Lower lobe of right lung (tissue), 2 donors: ENCODE measurements at regions of chr14 and their contacts with region 1.

Region 1: GRCh38 chr14:102437997-102438915 is 71.3 kb downstream of the ANKRD9 start:
- DNase-seq: peak; percentile 88
- ATAC-seq: peak; percentile 95 to 96
- H3K4me3 ChIP-seq: peak overlapping the region; percentile 33
- H3K27ac ChIP-seq: no peak overlapping the region
- H3K4me1 ChIP-seq: peaks cover 8% of the 10 kb centered on the region
- H3K27me3 ChIP-seq: no peaks in the 10 kb centered on the region
- CTCF ChIP-seq: peak; percentile 84

Region 2: DNA sequence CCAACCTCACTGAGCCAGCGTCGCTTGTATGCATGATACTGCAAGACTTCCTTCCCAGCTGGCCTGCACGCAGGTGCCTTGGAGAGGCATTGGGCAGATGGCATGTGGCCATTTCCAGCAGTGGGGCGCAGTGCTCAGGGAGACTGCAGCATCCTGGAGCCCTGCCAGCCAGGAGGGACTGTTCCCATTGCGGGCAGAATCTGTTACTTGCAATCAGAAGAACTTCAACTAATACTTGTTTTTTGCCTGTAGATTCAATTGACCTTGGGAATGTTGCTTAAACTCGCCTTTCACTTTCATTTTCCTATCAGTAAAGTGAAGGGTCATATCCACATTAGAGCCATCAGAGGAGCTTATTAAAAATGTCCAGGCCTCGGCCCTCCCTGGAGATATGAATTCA is 41.5 kb after region 1 on chr14:
- intact Hi-C with region 1: no loop called
- DNase-seq: peak; percentile 76
- ATAC-seq: peak; percentile 47 to 71
- H3K4me3 ChIP-seq: peak overlapping the region; percentile 36
- H3K27ac ChIP-seq: peak overlapping the region; percentile 54
- H3K4me1 ChIP-seq: peaks cover 16% of the 10 kb centered on the region
- H3K27me3 ChIP-seq: no peaks in the 10 kb centered on the region
- CTCF ChIP-seq: no peak

Region 3: GRCh38 chr14:102516531-102517415 is 78.5 kb after region 1 on chr14:
- intact Hi-C with region 1: loop called (anchors 5 kb)
- DNase-seq: peak; percentile 71
- ATAC-seq: peak; percentile 90 to 91
- H3K4me3 ChIP-seq: peak overlapping the region; percentile 69
- H3K27ac ChIP-seq: peak overlapping the region; percentile 73
- H3K4me1 ChIP-seq: peaks cover 6% of the 10 kb centered on the region
- H3K27me3 ChIP-seq: no peaks in the 10 kb centered on the region
- CTCF ChIP-seq: peak; percentile 88